Dendritic cell treated with granulocyte-macrophage colony-stimulating factor and Interleukin-4, amounts not matched to agents 40 ng/mL and 50 ng/mL, for 4 days (primary cell): ENCODE measurements at regions of chr1 and their contacts with region 1.

Region 1: GRCh38 chr1:61851849-61852669 is 109.8 kb downstream of the PATJ start:
- H3K4me3 Mint-ChIP-seq: no peak overlapping the region
- H3K27ac Mint-ChIP-seq: no peak overlapping the region
- H3K4me1 Mint-ChIP-seq: no peaks in the 10 kb centered on the region
- H3K27me3 Mint-ChIP-seq: no peaks in the 10 kb centered on the region

Region 2: GRCh38 chr1:59971464-59971911 is 1880.6 kb before region 1 on chr1:
- intact Hi-C with region 1: loop called (anchors 5 kb)
- H3K4me3 Mint-ChIP-seq: no peak overlapping the region
- H3K27ac Mint-ChIP-seq: no peak overlapping the region
- H3K4me1 Mint-ChIP-seq: no peaks in the 10 kb centered on the region
- H3K27me3 Mint-ChIP-seq: peaks cover 4% of the 10 kb centered on the region

Region 3: DNA sequence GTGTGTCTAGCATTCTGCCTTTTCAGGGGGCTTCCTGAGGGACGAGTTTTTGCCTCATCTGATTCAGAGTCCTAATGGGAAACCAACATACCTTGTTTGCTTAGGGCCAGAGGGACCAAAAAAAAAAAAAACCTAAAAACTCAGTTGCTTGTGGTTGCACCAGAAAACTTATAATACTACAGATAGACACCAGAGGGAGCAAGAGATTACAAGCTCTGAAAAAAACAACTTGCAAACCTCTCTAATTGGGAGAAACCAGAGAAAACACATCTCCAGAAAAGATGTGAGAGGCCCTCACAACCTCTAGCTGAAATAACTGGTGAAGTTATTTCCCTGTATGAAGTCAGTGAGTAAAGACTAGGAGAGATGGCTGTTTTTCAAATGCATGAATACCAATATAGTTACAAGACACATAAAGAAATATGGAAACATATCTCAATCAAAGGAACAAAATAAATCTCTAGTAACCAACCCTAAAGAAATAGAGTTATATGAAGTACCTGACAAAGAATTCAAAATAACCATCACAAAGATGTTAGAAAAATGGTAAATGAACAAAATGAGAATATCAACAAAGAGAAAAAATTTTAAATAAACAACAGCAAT is 1003.4 kb before region 1 on chr1:
- intact Hi-C with region 1: loop called (anchors 1 kb)
- H3K4me3 Mint-ChIP-seq: no peak overlapping the region
- H3K27ac Mint-ChIP-seq: no peak overlapping the region
- H3K4me1 Mint-ChIP-seq: no peaks in the 10 kb centered on the region
- H3K27me3 Mint-ChIP-seq: no peaks in the 10 kb centered on the region

Region 4: GRCh38 chr1:60978421-60979357 is 873.4 kb before region 1 on chr1:
- intact Hi-C with region 1: loop called (anchors 10 kb)
- H3K4me3 Mint-ChIP-seq: no peak overlapping the region
- H3K27ac Mint-ChIP-seq: no peak overlapping the region
- H3K4me1 Mint-ChIP-seq: no peaks in the 10 kb centered on the region
- H3K27me3 Mint-ChIP-seq: no peaks in the 10 kb centered on the region

Region 5: GRCh38 chr1:61043010-61043820 is 808.8 kb before region 1 on chr1:
- intact Hi-C with region 1: loop called (anchors 2 kb)
- H3K4me3 Mint-ChIP-seq: peak overlapping the region; percentile 80
- H3K27ac Mint-ChIP-seq: no peak overlapping the region
- H3K4me1 Mint-ChIP-seq: peaks cover 12% of the 10 kb centered on the region
- H3K27me3 Mint-ChIP-seq: peaks cover 30% of the 10 kb centered on the region

Region 6: DNA sequence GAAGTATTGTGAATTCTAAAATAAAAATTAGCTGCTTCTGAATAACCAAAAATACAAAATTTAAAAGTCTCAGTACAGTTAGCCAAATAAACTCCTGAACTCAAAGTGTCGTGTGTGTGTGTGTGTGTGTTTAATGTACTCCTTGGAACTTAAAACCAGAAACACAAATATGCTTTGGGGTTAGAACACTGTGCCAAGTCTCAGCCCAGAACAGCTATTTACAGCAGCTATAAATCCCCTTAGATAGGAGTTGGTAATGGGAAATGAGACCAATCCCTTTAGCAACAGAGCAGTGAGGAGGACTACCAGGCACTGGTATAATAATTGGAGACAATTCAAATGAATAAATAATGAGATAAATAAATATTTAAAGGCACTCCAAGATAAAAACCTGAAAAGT is 26.7 kb before region 1 on chr1:
- intact Hi-C with region 1: no loop called
- H3K4me3 Mint-ChIP-seq: no peak overlapping the region
- H3K27ac Mint-ChIP-seq: no peak overlapping the region
- H3K4me1 Mint-ChIP-seq: peaks cover 5% of the 10 kb centered on the region
- H3K27me3 Mint-ChIP-seq: no peaks in the 10 kb centered on the region